ENCODE measurements at regions of chr1 and their contacts with region 1.

Region 1: DNA sequence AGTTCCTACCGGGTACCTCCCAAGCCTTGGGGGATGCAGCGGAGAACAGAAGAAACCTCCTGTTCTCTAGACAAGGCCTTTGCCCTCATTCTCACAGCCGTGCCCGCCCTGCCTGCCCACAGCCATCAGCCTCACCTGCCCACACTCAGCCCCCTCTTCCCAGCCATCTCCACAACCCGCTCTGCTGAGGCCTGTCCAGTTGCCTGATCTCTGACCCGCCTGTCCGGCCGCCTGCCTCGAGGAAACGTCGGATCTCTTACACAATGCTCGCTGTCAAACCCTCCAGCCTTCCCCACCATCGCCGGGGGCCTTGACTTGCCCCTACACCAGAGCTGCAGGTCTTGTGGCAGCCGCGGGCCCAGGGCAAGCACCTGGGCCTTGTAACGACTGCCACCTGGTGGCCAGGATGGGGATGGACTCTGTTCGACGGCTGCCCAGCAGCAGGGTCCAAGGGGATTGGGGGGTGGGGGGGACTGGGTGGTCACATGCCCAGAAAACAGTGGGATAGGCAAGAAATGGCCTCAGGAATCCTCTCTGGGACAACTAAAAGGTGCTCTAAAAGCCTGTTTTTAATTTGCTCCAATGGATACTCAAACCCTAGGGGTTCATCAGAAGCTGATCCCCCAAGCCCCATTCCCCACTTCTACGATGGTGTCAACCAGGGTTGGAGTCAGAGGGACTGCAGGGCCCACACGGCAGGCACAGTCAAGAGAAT is 31.0 kb downstream of the SLC45A1 start:
- DNase-seq: peak; percentile 24
- H3K4me3 ChIP-seq: no peak overlapping the region
- H3K27ac ChIP-seq: no peak overlapping the region
- H3K4me1 ChIP-seq: peaks cover 14% of the 10 kb centered on the region
- H3K27me3 ChIP-seq: no peaks in the 10 kb centered on the region
- CTCF ChIP-seq: peak; percentile 53 to 88

Region 2: DNA sequence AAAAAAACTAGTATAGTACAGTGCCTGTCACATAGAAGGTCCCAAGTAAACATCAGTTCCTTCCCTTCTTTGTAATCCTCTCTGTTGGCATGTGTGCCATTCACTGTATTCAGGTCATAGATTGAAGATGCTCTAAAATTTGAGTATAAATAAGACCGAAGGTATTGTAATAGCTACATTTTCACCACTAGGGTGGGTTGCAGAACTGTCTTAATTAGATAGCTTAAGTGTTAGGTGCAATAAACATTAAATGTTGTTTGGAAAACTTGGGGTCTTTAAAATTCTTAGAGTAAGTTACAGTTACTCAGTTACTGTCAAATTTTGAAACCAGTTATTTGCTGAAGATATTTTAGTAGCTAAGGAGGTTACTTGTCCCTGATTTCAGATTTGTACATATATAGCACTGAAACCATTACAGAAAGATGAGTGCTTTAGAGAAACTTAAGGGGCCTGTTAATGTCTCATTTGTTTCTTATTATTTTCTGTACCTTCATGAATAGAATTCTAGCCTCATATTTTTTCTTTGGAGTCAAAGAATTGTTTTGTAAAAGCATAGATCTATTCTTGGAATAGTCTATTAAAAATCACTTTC is 540.6 kb before region 1 on chr1:
- CTCF ChIA-PET with region 1: no interaction called
- dilution Hi-C with region 1: no loop called
- in situ Hi-C with region 1: no loop called
- intact Hi-C with region 1: loop called (anchors 2 kb)
- DNase-seq: peak; percentile 27
- H3K4me3 ChIP-seq: no peak overlapping the region
- H3K27ac ChIP-seq: no peak overlapping the region
- H3K4me1 ChIP-seq: peaks cover 9% of the 10 kb centered on the region
- H3K27me3 ChIP-seq: no peaks in the 10 kb centered on the region
- CTCF ChIP-seq: peak; percentile 50 to 53

Region 3: GRCh38 chr1:7983086-7983778 is 365.7 kb before region 1 on chr1:
- CTCF ChIA-PET with region 1: no interaction called
- dilution Hi-C with region 1: no loop called
- in situ Hi-C with region 1: no loop called
- intact Hi-C with region 1: loop called (anchors 1 kb)
- DNase-seq: no peak
- H3K4me3 ChIP-seq: no peak overlapping the region
- H3K27ac ChIP-seq: no peak overlapping the region
- H3K4me1 ChIP-seq: peaks cover 3% of the 10 kb centered on the region
- H3K27me3 ChIP-seq: no peaks in the 10 kb centered on the region
- CTCF ChIP-seq: no peak

Region 4: DNA sequence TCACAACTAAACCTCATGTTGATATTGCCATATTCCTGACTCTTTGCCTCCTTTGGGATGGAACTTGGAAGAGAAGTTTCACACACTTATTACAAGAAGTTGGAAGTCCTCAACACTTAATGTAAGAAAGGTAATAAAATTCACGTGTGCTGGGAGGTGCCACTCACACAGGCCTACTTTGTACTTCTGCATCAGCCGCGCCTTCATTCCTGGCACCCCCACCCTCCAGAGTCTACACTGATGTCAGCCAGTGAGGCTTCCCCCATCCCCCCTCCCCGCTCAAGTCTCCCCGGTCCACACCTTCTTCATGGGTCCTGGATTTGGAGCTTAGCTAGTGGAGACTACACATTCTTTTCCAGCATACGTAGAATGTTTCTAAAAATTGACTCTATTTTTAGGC is 55.8 kb before region 1 on chr1:
- CTCF ChIA-PET with region 1: no interaction called
- dilution Hi-C with region 1: loop called (anchors 5 kb)
- in situ Hi-C with region 1: no loop called
- intact Hi-C with region 1: no loop called
- DNase-seq: no peak
- H3K4me3 ChIP-seq: no peak overlapping the region
- H3K27ac ChIP-seq: no peak overlapping the region
- H3K4me1 ChIP-seq: no peaks in the 10 kb centered on the region
- H3K27me3 ChIP-seq: no peaks in the 10 kb centered on the region
- CTCF ChIP-seq: no peak

Region 5: DNA sequence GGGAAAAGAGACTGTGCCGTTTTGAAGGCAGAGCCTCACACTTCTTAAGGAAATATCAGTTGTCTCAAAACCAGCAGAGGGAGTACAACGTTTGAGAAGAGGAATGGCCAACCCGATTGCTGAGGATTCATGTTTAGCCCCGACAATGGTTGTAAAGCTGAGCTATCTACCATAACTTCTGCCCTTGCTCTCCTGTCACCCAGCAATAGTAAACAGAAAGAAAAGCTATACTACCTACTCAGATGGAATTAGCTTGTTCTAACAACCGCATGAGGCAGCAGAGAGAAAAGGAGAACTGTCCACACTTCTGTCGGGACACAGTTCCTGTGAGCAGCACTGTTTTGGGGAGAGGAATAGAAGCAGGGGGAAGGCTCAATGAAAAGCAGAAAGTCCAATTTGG is 60.2 kb after region 1 on chr1:
- CTCF ChIA-PET with region 1: no interaction called
- dilution Hi-C with region 1: loop called (anchors 5 kb)
- in situ Hi-C with region 1: no loop called
- intact Hi-C with region 1: no loop called
- DNase-seq: peak; percentile 53
- H3K4me3 ChIP-seq: no peak overlapping the region
- H3K27ac ChIP-seq: no peak overlapping the region
- H3K4me1 ChIP-seq: peaks cover 9% of the 10 kb centered on the region
- H3K27me3 ChIP-seq: no peaks in the 10 kb centered on the region
- CTCF ChIP-seq: peak; percentile 54